Gastrocnemius medialis (tissue), 4 donors: ENCODE measurements at regions of chr4 and their contacts with region 1.

Region 1: DNA sequence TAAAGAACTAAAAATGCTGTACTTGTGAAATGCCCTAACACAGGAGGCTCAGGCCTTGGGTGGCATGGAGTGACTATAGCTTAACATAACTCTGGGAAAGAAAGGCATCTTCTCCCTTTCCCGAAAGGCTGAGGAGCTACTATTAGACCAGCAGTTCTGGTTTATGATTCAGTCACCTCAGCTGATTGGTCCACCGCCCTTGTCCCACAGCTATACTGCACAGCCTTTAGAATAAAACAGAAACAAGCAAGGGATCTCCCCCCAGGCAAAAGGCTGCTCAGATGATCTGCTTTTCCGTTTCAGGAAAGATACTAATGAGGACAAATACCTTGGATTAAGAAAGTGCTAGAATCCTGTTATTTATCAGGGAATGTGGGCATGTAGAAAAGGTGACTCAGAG is 171.3 kb downstream of the SNCA start:
- DNase-seq: no peak
- ATAC-seq: no peak
- H3K4me3 ChIP-seq: no peak overlapping the region
- H3K27ac ChIP-seq: no peak overlapping the region
- H3K4me1 ChIP-seq: no peaks in the 10 kb centered on the region
- H3K27me3 ChIP-seq: no peaks in the 10 kb centered on the region
- CTCF ChIP-seq: no peak
- POLR2A ChIP-seq: no peak

Region 2: DNA sequence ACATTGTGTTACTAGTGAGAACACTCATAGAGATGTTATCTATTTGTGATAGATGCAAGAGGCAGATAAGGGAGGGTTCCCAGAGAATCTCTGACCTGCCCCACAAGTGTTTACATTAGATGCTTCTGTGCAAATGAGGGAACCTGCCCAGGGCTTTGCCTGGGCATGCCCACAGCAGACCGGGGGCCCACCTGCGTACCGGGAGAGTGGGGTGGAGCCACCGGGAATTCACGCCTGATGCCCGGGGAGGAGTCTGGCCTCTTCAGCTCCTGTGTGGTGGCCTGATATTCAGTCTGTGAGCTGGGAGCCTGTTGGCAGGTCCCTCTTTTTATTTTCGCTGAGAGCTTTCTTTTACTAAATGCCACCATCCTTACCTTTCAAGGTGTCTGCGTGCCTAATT is 15.5 kb after region 1 on chr4:
- in situ Hi-C with region 1: no loop called
- intact Hi-C with region 1: loop called (anchors 2 kb)
- DNase-seq: no peak
- ATAC-seq: no peak
- H3K4me3 ChIP-seq: no peak overlapping the region
- H3K27ac ChIP-seq: no peak overlapping the region
- H3K4me1 ChIP-seq: no peaks in the 10 kb centered on the region
- H3K27me3 ChIP-seq: no peaks in the 10 kb centered on the region
- CTCF ChIP-seq: no peak
- POLR2A ChIP-seq: no peak

Region 3: DNA sequence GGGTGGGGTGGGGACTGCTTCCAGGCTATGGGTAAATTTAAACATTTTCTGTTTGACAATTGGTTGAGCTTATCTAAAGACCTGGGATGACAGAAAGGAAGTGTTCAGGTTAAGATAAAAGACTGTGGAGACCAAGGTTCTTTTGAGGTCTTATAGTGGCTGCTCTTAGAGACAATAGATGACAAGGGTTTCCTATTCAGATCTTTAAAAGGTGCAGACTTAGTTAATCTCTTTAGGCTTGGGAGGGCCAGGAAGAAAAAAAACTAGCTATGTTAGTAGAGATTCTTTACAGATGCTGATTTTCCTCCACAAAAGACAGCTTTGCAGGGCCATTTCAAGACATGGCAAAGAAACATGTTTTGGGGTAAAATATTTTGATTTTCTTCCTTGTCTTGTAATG is 1434.0 kb after region 1 on chr4:
- in situ Hi-C with region 1: no loop called
- intact Hi-C with region 1: no loop called
- DNase-seq: no peak
- ATAC-seq: no peak
- H3K4me3 ChIP-seq: no peak overlapping the region
- H3K27ac ChIP-seq: no peak overlapping the region
- H3K4me1 ChIP-seq: no peaks in the 10 kb centered on the region
- H3K27me3 ChIP-seq: no peaks in the 10 kb centered on the region
- CTCF ChIP-seq: no peak
- POLR2A ChIP-seq: no peak